Cardiac septum (tissue), 1 donor: ENCODE measurements at regions of chr17 and their contacts with region 1.

Region 1: DNA sequence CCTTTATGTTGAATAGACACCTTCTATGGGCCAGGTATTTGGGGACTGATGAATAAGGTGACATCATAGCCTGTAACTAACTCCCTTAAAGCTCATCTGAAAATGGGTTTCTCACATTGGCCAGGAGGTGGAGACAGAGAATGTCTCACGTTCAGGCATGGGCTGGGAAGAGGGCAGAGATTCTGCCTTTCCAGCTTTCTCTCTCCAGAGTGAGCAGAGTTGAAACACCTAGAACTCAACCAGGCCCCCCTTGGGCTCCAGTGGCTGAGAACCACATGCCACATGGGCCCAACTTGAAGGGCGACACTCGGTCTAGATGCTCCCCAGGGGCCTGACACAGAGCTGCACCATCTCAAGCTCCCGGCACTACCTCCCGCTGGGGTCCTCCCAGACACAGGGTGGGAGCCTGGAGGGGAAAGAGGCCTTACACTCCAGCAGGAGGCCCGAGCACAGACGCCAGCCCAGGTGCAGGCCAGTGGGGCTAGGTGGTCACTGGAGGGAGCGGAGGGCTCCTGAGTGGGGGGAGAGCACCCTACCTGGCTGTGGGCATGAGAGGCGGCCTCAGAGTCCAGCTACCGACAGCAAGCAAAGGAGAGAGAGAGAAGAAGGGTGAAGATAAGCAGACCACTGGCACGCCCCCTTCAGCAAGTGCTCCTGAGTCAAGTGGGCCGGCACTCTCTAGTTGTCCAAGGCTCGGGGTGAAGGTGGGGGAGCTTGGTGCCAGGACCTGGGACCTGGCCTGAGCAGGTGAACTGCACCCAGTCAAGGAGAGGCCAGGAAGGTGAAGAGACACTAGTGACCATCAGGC is 55.9 kb downstream of the MYO18A start:
- DNase-seq: no peak

Region 2: GRCh38 chr17:29219378-29220047 is 95.2 kb after region 1 on chr17:
- intact Hi-C with region 1: loop called (anchors 2 kb)
- DNase-seq: peak; percentile 80